Psoas muscle (tissue), 8 donors: ENCODE measurements at regions of chr2 and their contacts with region 1.

Region 1: DNA sequence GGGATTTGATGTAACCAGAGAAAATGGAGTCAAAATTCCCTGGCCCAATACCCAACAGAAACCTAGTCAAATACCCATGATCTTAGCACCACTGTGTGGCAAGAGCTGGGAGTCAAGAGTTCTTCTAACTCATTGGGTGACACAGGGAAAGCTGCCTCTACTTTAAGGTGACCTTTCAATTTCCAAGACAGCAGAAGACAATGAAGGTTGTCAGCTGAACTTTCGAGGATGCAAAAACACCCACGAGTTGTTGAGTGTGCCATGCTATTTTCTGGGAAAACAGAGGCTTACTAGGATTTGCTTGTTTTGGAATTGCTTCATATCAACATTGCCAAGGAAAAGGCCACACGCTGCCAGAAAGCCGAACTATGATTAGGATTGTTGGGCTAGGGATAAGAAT is 61.6 kb upstream of the CYRIA start:
- DNase-seq: no peak
- ATAC-seq: peak; percentile 52 to 76 (median 69)
- H3K4me3 ChIP-seq: no peak overlapping the region
- H3K27ac ChIP-seq: no peak overlapping the region
- H3K4me1 ChIP-seq: peaks cover 10% of the 10 kb centered on the region
- H3K27me3 ChIP-seq: no peaks in the 10 kb centered on the region
- CTCF ChIP-seq: peak; percentile 16

Region 2: DNA sequence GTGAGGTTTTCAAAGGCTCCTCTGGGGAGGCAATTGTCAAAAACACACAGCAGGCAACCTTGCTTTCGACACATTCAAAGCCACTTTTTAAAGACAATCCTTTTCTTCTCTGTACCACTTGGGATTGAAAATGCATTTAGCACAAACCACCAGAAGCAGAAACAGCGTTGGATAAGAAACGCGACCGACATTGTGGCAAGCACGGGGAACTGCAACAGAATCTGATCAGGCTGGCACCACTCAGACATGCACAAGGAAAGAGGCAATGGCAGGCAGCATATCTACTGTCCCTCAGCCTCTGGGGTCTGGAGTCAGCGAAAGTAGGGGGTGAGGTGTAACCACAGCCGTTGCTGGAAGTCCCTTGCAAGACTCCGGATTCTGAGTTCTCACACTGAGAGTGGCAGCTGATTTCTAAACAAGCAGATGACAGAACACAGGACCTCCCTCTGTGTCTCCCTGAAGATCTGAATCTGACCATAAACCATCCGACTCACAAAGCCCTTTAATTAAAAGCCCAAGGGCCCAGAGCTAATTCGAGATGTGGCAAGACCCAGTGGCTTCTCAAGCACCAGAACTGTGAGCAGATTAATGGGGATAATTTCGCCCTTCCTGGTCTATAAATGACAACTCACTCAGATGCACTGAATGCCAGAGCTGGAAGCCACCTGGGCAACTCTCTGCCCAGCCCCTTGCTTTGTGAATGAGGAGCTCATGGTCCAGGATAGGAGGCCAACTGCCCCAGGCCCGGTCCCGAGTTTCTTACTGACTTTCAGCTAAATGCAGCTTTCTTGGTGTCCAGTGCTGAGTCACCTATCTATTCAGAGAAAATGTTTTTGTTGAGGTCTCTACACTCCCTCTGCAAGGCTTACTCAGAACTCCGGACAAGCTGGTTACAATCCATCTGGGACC is 91.2 kb before region 1 on chr2:
- intact Hi-C with region 1: loop called in 1 of 2 experiments (anchors 5 kb)
- DNase-seq: no peak
- ATAC-seq: peak; percentile 22 to 68 (median 55)
- H3K4me3 ChIP-seq: no peak overlapping the region
- H3K27ac ChIP-seq: peak overlapping the region; percentile 61
- H3K4me1 ChIP-seq: peaks cover 73% of the 10 kb centered on the region
- H3K27me3 ChIP-seq: no peaks in the 10 kb centered on the region
- CTCF ChIP-seq: peak; percentile 14

Region 3: DNA sequence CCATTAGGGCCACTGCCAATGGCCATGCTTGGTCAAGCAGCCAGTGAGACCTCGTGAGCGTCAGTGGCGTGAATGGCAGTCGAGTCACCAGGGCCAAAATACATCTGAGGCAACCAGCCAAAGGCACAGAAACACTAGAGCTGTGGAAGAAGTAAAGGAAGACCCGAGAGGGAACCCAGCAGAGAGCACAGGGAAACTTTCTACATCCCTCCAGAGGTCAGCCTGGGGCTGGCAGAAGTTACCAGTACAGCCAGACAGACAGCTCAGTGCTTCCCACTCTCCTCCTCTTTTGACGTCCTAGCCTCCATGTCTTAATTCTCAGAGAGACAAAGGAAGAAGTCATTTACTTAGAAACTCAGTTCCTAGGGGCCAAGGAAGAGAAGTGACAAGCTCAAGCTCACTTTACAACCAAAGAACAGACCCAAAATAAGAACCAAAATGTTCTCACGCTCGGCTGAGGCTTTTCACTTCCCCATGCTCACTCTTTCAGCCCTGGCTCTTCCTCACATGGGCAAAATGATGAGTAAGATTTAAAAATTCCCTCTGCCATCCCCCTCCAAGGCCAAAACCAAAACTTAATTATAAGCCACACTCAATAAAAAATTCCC is 70.4 kb before region 1 on chr2:
- intact Hi-C with region 1: loop called in 1 of 2 experiments (anchors 5 kb)
- DNase-seq: peak; percentile 81 to 91
- ATAC-seq: peak; percentile 88 to 93 (median 91)
- H3K4me3 ChIP-seq: peak overlapping the region; percentile 43
- H3K27ac ChIP-seq: peak overlapping the region; percentile 96
- H3K4me1 ChIP-seq: peaks cover 90% of the 10 kb centered on the region
- H3K27me3 ChIP-seq: no peaks in the 10 kb centered on the region
- CTCF ChIP-seq: no peak

Region 4: DNA sequence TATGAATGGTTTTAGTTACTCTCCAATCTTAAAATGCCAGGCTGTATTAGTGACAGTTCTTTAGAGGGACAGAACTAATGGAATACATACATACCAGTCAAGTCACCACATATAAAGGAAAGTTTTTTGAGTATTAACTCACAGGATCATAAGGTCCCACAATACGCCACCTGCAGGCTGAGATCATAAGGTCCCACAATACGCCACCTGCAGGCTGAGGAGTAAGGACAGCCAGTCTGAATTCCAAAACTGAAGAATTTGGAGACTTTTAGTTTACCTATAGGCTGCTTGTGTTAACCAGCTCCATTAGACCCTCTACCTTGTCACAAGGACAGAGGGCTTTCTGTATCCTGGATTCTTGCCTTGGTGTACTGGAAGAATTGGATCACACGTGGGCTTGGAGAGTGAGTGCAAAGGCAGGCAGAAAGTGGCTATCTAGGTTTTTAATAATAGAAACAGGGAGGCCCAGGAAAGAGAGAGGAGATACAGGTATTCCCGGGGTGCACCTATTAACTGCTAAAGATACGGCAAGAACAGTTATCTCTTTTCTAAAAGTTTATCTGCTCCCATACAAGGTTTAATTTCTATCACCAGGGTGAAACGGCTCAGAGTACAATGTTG is 173.3 kb after region 1 on chr2:
- intact Hi-C with region 1: no loop called
- DNase-seq: no peak
- ATAC-seq: no peak
- H3K4me3 ChIP-seq: no peak overlapping the region
- H3K27ac ChIP-seq: no peak overlapping the region
- H3K4me1 ChIP-seq: no peaks in the 10 kb centered on the region
- H3K27me3 ChIP-seq: no peaks in the 10 kb centered on the region
- CTCF ChIP-seq: no peak